Left cardiac atrium (tissue), 4 donors: ENCODE measurements at regions of chrX and their contacts with region 1.

Region 1: DNA sequence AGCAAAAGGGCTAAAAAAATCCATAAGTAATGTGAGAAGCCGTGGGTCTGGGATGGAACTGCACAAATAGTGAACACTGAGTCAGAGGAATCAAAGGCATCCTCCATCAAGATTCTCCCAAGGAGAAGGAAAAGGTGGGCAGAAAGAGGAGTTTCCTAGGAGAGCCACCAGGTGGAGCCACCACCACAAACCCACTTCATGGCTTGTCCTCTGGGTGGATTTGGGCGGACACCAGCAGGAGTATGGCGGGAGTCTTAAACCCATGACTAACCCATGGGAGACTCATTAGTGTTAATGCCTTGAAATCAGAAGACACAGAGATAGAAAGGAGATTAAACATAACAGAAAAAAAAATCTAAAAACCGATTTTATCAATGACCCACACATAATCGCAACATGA is 147.7 kb downstream of the SH3KBP1 start:
- DNase-seq: peak; percentile 58
- ATAC-seq: peak; percentile 38 to 72

Region 2: GRCh38 chrX:19585332-19586082 is 154.2 kb before region 1 on chrX:
- intact Hi-C with region 1: loop called in 1 of 2 experiments (anchors 5 kb)
- DNase-seq: no peak
- ATAC-seq: no peak